Naive thymus-derived CD4-positive, alpha-beta T cell (primary cell): ENCODE measurements at regions of chr19 and their contacts with region 1.

Region 1: DNA sequence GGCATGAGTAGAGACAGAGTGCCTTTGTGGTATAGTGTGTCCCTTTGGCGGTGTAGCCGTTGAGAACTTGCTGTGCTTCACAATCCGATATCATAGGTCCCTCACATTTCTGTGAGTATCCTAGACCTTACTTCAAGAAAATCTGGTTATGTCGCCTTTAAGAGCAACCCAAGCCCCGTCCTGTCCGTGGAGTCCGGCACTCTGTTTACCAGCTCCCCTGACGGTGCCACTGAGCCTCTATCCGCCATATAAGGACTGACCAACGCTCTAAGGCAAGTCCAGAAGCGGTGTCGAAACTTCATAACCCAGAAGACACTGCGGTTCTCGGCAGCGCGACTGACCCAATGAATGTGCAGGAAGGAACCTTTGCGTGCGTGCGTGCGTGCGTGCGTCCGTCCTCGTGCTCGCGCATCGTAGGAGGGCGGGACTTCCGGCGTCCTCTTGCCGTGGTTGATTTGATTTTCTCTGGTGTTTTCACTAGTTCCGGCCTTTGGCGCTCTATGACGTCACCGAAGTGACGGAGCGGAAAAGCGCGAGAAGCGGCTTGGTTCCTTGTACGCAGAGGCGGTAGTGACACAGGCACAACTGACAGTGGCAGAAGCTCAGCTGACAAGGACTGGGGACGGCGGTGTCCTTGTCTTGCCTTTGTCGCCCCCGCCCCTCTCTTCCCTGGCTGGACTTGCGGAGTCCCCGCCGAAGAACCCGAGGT is at the starts of genes TRAPPC2B and ZNF547:
- DNase-seq: peak; percentile 89 to 99 (median 98)
- ATAC-seq: peak; percentile 97
- H3K4me3 ChIP-seq: peak within 1 kb of the TSS; percentile 74
- H3K4me3 Mint-ChIP-seq: peak within 1 kb of the TSS; percentile 90 to 97 (median 94)
- H3K27ac ChIP-seq: peak within 1 kb of the TSS; percentile 84
- H3K27ac Mint-ChIP-seq: peak within 1 kb of the TSS; percentile 94 to 100 (median 97)
- H3K4me1 ChIP-seq: peaks cover 9 to 14% of the 10 kb centered on the region in 2 donors
- H3K4me1 Mint-ChIP-seq: peaks cover 12 to 26% (median 18%) of the 10 kb centered on the region in 7 donors
- H3K27me3 ChIP-seq: no peaks in the 10 kb centered on the region
- H3K27me3 Mint-ChIP-seq: peaks cover 0 to 2% (median 0%) of the 10 kb centered on the region in 5 donors
- total RNA-seq, gene TRAPPC2B: 7.7 to 11.8 (median 9.0) TPM
- total RNA-seq, gene ZNF547: 0.40 to 10.1 (median 3.6) TPM

Region 2: GRCh38 chr19:56393119-56394012 is 969.8 kb before region 1 on chr19 and contains the start of gene ZNF582:
- CTCF ChIA-PET with region 1: no interaction called
- POLR2A ChIA-PET with region 1: no interaction called
- intact Hi-C with region 1: loop called in 1 of 2 experiments (anchors 1 kb)
- DNase-seq: peak; percentile 79 to 94 (median 90)
- ATAC-seq: peak; percentile 98
- H3K4me3 ChIP-seq: peak within 1 kb of the TSS; percentile 90
- H3K4me3 Mint-ChIP-seq: peak within 1 kb of the TSS; percentile 89 to 99 (median 98)
- H3K27ac ChIP-seq: peak within 1 kb of the TSS; percentile 92
- H3K27ac Mint-ChIP-seq: peak within 1 kb of the TSS; percentile 91 to 99 (median 96)
- H3K4me1 ChIP-seq: peaks cover 3 to 5% of the 10 kb centered on the region in 2 donors
- H3K4me1 Mint-ChIP-seq: peaks cover 3 to 32% (median 10%) of the 10 kb centered on the region in 7 donors
- H3K27me3 ChIP-seq: no peaks in the 10 kb centered on the region
- H3K27me3 Mint-ChIP-seq: no peaks in the 10 kb centered on the region
- total RNA-seq, gene ZNF582: 1.7 to 7.6 (median 3.3) TPM

Region 3: DNA sequence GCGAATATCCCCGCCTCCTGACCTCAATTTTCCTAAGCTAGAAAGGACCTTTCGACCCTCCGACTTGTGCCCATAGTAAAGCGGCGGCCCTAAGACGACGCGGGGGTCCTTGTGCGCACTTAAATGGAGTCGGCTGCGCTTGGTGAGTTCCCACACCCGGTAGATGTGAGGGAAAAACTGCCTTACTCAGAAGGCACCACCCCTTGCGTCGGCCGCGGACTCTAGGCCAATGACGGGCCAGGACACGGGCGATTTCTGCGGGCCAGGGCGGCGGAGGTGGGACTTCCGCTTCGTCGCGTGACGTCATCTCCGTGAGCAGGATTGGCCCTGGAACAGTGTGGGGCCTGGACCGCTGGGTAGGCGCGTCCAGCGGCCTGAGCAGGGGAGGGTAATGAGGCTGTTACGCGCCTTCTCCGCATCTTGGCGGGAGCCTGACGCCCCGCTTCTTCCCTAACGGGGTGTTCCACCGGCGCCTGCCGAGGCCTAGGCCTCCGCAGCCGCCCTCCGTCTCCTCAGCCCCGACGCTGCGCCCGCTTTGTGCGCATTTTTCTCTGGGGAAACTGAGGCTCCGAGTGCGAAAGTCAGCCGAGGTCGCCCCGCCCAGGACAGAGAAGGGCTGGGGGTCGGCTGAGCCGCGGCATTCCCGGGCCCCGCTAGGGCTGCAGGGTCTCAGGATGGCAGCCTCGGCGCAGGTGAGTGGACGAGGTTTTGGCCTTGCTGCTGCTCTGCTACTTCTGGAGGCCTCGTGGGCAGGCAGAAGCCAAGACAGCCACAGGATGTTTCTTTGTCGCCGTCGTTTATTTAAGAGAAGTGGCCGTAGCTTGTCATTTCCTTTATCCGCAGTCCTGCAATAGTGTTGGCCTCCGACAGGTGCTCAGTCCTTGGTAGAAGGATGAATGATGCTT is 42.7 kb before region 1 on chr19 and contains the start of gene ZNF543:
- CTCF ChIA-PET with region 1: no interaction called
- POLR2A ChIA-PET with region 1: interaction called, 3 read pairs
- intact Hi-C with region 1: loop called (anchors 1 kb)
- DNase-seq: peak; percentile 78 to 90 (median 84)
- ATAC-seq: peak; percentile 98
- H3K4me3 ChIP-seq: peak within 1 kb of the TSS; percentile 76
- H3K4me3 Mint-ChIP-seq: peak within 1 kb of the TSS; percentile 87 to 98 (median 94)
- H3K27ac ChIP-seq: peak within 1 kb of the TSS; percentile 83
- H3K27ac Mint-ChIP-seq: peak within 1 kb of the TSS; percentile 82 to 98 (median 96)
- H3K4me1 ChIP-seq: peaks cover 0 to 18% of the 10 kb centered on the region in 2 donors
- H3K4me1 Mint-ChIP-seq: peaks cover 14 to 30% (median 25%) of the 10 kb centered on the region in 7 donors
- H3K27me3 ChIP-seq: peaks cover 0 to 6% of the 10 kb centered on the region in 2 donors
- H3K27me3 Mint-ChIP-seq: peaks cover 20 to 31% (median 24%) of the 10 kb centered on the region in 5 donors
- total RNA-seq, gene ZNF543: 3.6 to 9.0 (median 8.0) TPM

Region 4: DNA sequence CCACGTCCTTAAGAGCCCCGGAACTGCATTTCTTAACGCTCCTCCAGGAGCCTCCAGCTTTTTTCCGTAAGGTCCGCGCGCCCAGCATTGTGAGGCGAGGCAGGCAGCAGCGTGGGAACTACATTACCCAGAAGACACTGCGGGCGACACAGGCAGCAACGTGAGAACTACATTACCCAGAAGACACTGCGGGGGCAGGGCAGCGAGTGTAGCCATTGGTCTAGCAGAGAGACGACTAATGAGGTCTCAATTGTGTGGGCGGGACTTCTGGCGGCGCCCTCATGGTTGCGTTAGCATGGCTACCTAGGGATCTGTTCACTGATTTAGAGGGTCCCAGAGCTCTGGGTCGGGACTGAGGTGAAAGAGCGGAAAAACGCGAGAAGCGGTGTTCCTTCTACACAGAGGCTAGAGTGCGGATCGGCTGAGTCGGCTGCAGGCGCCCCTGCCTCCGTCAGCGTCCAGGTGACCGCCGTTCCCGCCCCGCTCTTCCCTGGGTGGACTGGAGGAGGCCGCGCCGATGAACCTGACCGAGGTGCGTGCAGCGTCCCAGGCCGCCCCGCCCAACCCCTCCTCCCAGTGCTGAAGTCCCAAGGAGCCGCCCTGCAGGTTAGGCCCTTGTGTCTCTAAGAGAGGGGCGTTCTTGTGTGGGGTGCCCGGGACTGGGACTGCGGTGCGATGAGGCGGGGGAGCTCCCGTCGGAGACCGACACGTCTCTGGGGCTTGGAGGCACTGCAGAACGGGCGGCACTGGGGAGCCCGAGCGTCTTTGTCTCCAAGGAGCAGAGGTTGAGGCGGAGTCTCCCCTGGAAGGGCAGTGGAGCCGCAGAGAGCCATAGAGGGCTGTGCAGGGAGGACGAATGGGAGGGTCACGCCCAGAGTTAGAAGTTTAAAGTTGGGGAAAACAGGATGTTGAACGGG is 72.2 kb after region 1 on chr19 and contains the start of gene ZNF749:
- CTCF ChIA-PET with region 1: no interaction called
- POLR2A ChIA-PET with region 1: interaction called, 5 read pairs
- intact Hi-C with region 1: loop called (anchors 1 kb)
- DNase-seq: peak; percentile 76 to 100 (median 96)
- ATAC-seq: peak; percentile 100
- H3K4me3 ChIP-seq: peak within 1 kb of the TSS; percentile 75
- H3K4me3 Mint-ChIP-seq: peak within 1 kb of the TSS; percentile 92 to 100 (median 98)
- H3K27ac ChIP-seq: peak within 1 kb of the TSS; percentile 77
- H3K27ac Mint-ChIP-seq: peak within 1 kb of the TSS; percentile 79 to 98 (median 95)
- H3K4me1 ChIP-seq: peaks cover 7 to 14% of the 10 kb centered on the region in 2 donors
- H3K4me1 Mint-ChIP-seq: peaks cover 23 to 42% (median 38%) of the 10 kb centered on the region in 7 donors
- H3K27me3 ChIP-seq: no peaks in the 10 kb centered on the region
- H3K27me3 Mint-ChIP-seq: no peaks in the 10 kb centered on the region
- total RNA-seq, gene ZNF749: 8.9 to 17.9 (median 13.2) TPM

Region 5: GRCh38 chr19:57578487-57579205 is 215.5 kb after region 1 on chr19 and contains the start of gene ZNF416:
- CTCF ChIA-PET with region 1: no interaction called
- POLR2A ChIA-PET with region 1: no interaction called
- intact Hi-C with region 1: loop called in 1 of 2 experiments (anchors 1 kb)
- DNase-seq: peak; percentile 76 to 98 (median 96)
- ATAC-seq: peak; percentile 99
- H3K4me3 ChIP-seq: peak within 1 kb of the TSS; percentile 73
- H3K4me3 Mint-ChIP-seq: peak within 1 kb of the TSS; percentile 75 to 91 (median 85)
- H3K27ac ChIP-seq: peak within 1 kb of the TSS; percentile 80
- H3K27ac Mint-ChIP-seq: peak within 1 kb of the TSS; percentile 78 to 91 (median 87)
- H3K4me1 ChIP-seq: peaks cover 16 to 20% of the 10 kb centered on the region in 2 donors
- H3K4me1 Mint-ChIP-seq: peaks cover 13 to 35% (median 26%) of the 10 kb centered on the region in 7 donors
- H3K27me3 ChIP-seq: no peaks in the 10 kb centered on the region
- H3K27me3 Mint-ChIP-seq: no peaks in the 10 kb centered on the region
- total RNA-seq, gene ZNF416: 4.4 to 13.8 (median 5.7) TPM

Region 6: GRCh38 chr19:57903618-57904184 is 540.5 kb after region 1 on chr19:
- CTCF ChIA-PET with region 1: no interaction called
- POLR2A ChIA-PET with region 1: no interaction called
- intact Hi-C with region 1: no loop called
- DNase-seq: no peak
- ATAC-seq: no peak
- H3K4me3 ChIP-seq: no peak overlapping the region
- H3K4me3 Mint-ChIP-seq: no peak overlapping the region
- H3K27ac ChIP-seq: no peak overlapping the region
- H3K27ac Mint-ChIP-seq: no peak overlapping the region
- H3K4me1 ChIP-seq: no peaks in the 10 kb centered on the region
- H3K4me1 Mint-ChIP-seq: peaks cover 0 to 8% (median 4%) of the 10 kb centered on the region in 7 donors
- H3K27me3 ChIP-seq: no peaks in the 10 kb centered on the region
- H3K27me3 Mint-ChIP-seq: no peaks in the 10 kb centered on the region

Region 7: DNA sequence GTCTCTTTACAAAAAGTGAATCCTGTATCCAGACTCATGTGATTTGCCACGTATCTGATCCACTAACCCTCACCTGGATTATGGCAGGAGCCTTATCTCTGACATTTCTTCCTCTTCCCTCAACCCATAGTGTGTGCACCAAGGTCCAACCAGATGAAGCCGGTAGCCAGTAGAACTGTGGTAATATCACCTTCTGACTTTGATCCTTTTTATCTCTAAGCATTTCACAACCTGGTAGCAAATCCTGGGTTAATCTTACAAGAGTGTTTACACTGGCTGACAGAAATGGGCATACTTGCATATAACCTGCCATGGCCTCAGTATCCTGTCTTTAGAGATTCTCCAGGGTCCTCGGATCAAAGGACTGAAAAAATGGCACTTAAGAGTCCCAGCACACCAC is 551.4 kb after region 1 on chr19:
- CTCF ChIA-PET with region 1: no interaction called
- POLR2A ChIA-PET with region 1: no interaction called
- intact Hi-C with region 1: loop called in 1 of 2 experiments (anchors 1 kb)
- DNase-seq: no peak
- ATAC-seq: no peak
- H3K4me3 ChIP-seq: peak overlapping the region; percentile 43
- H3K4me3 Mint-ChIP-seq: peak overlapping the region; percentile 93 to 99 (median 97)
- H3K27ac ChIP-seq: no peak overlapping the region
- H3K27ac Mint-ChIP-seq: peak overlapping the region in 5 of 9 donors; percentile 6 to 73 (median 47)
- H3K4me1 ChIP-seq: peaks cover 9 to 10% of the 10 kb centered on the region in 2 donors
- H3K4me1 Mint-ChIP-seq: peaks cover 21 to 39% (median 36%) of the 10 kb centered on the region in 7 donors
- H3K27me3 ChIP-seq: no peaks in the 10 kb centered on the region
- H3K27me3 Mint-ChIP-seq: no peaks in the 10 kb centered on the region

Region 8: DNA sequence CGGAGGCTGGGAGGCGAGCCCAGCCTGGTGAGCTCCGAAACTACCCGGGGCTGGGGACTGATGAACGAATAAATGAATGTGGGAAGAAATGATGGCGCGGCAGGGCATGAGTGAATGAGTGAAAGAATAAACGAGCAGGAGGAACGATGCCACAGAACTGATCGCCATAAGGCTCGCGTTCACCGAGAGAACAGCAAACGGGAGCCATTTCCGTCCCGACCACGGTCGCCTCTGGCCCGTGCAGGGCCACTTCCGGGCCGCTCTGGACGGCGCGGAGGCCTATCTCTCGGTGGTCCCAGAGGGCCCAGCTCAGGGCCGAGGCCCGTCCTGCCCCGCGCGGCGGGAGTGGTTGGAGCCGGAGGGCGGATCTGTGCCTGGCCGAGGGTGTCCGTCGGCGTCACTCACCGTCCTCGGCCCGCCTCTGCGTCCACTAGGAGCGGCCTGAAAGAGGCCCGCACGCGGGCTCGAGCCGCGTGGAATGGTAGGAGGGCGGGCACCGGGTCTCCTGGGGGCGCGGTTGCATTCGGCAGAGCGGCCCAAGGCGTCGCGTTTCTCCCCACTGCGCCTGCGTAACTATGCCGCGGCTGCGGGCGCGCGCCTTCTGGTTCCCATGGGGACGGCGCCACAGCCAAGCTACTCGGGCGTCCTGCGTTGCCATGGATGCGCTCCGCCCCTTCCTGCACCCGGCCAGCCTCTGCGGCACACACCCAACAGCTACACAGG is 999.3 kb after region 1 on chr19 and contains the start of gene ZNF497:
- CTCF ChIA-PET with region 1: no interaction called
- POLR2A ChIA-PET with region 1: no interaction called
- intact Hi-C with region 1: loop called in 1 of 2 experiments (anchors 1 kb)
- DNase-seq: peak; percentile 91 to 96 (median 95)
- ATAC-seq: peak; percentile 92
- H3K4me3 ChIP-seq: peak within 1 kb of the TSS; percentile 99
- H3K4me3 Mint-ChIP-seq: peak within 1 kb of the TSS; percentile 89 to 99 (median 95)
- H3K27ac ChIP-seq: peak within 1 kb of the TSS; percentile 78
- H3K27ac Mint-ChIP-seq: peak within 1 kb of the TSS; percentile 71 to 96 (median 90)
- H3K4me1 ChIP-seq: peaks cover 5 to 7% of the 10 kb centered on the region in 2 donors
- H3K4me1 Mint-ChIP-seq: peaks cover 7 to 21% (median 11%) of the 10 kb centered on the region in 7 donors
- H3K27me3 ChIP-seq: no peaks in the 10 kb centered on the region
- H3K27me3 Mint-ChIP-seq: peaks cover 0 to 5% (median 0%) of the 10 kb centered on the region in 5 donors
- total RNA-seq, gene ZNF497: 1.0 to 2.7 (median 1.8) TPM